ENCODE measurements at regions of chr9 and their contacts with region 1.

Region 1: GRCh38 chr9:136644598-136645351 is 17.9 kb upstream of the EGFL7 start:
- DNase-seq: peak; percentile 91
- H3K4me3 Mint-ChIP-seq: no peak overlapping the region
- H3K27ac Mint-ChIP-seq: no peak overlapping the region
- H3K4me1 Mint-ChIP-seq: no peaks in the 10 kb centered on the region
- H3K27me3 Mint-ChIP-seq: peaks cover 24% of the 10 kb centered on the region

Region 2: GRCh38 chr9:136488247-136489214 is 156.2 kb before region 1 on chr9:
- intact Hi-C with region 1: loop called (anchors 1 kb)
- DNase-seq: peak; percentile 93
- H3K4me3 Mint-ChIP-seq: no peak overlapping the region
- H3K27ac Mint-ChIP-seq: no peak overlapping the region
- H3K4me1 Mint-ChIP-seq: peaks cover 5% of the 10 kb centered on the region
- H3K27me3 Mint-ChIP-seq: peaks cover 2% of the 10 kb centered on the region

Region 3: GRCh38 chr9:136527721-136528691 is 116.8 kb before region 1 on chr9:
- intact Hi-C with region 1: no loop called
- DNase-seq: peak; percentile 64
- H3K4me3 Mint-ChIP-seq: no peak overlapping the region
- H3K27ac Mint-ChIP-seq: no peak overlapping the region
- H3K4me1 Mint-ChIP-seq: peaks cover 12% of the 10 kb centered on the region
- H3K27me3 Mint-ChIP-seq: no peaks in the 10 kb centered on the region

Region 4: DNA sequence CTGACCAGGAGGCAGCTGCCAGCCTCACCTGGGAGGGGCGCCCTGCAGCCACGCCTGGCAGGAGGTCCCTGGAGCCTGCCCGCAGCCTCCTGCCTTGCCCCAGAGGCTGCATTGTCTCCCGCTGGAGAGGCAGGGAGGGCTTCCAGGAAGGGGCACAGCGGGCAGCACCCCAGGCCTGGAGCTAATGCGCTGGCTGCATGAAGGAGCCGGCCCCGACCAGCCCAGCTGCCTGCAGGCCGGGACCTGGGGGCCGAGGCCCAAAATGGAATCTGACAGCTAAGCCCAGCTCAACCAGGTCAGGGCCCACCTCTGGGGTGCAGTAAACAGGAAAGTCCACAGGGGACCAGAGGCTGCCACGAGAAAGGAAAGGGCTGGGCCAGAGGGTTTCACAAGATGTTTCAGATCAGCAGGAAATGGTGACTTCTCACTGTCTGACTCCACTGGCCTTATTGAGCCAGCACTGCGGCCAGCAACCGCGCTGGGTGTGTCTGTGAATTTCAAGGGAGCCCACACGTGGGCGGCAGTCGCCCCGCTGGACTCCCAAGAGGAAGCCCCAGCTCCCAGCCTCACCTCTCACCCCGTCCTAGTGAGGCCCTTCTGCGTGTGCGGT is 80.3 kb before region 1 on chr9:
- intact Hi-C with region 1: no loop called
- DNase-seq: no peak
- H3K4me3 Mint-ChIP-seq: no peak overlapping the region
- H3K27ac Mint-ChIP-seq: no peak overlapping the region
- H3K4me1 Mint-ChIP-seq: no peaks in the 10 kb centered on the region
- H3K27me3 Mint-ChIP-seq: no peaks in the 10 kb centered on the region

Region 5: GRCh38 chr9:136599811-136600660 is 44.7 kb before region 1 on chr9:
- intact Hi-C with region 1: no loop called
- DNase-seq: no peak
- H3K4me3 Mint-ChIP-seq: no peak overlapping the region
- H3K27ac Mint-ChIP-seq: no peak overlapping the region
- H3K4me1 Mint-ChIP-seq: peaks cover 2% of the 10 kb centered on the region
- H3K27me3 Mint-ChIP-seq: peaks cover 13% of the 10 kb centered on the region

Region 6: GRCh38 chr9:136865735-136866103 is 220.9 kb after region 1 on chr9:
- intact Hi-C with region 1: no loop called
- DNase-seq: no peak
- H3K4me3 Mint-ChIP-seq: peak overlapping the region; percentile 90
- H3K27ac Mint-ChIP-seq: peak overlapping the region; percentile 89
- H3K4me1 Mint-ChIP-seq: peaks cover 19% of the 10 kb centered on the region
- H3K27me3 Mint-ChIP-seq: no peaks in the 10 kb centered on the region

Measured in activated CD4-positive, alpha-beta T cell treated with anti-CD3 and anti-CD28 coated beads, Interleukin-2, amount 10 ng/mL, durations not matched to agents 24 days and 14 days (primary cell).